ENCODE measurements at regions of chr5 and their contacts with region 1.

Region 1: GRCh38 chr5:82351754-82352145 is 73.6 kb upstream of the RPS23 start:
- DNase-seq: no peak
- ATAC-seq: peak; percentile 56 to 70
- H3K4me3 ChIP-seq: no peak overlapping the region
- H3K27ac ChIP-seq: no peak overlapping the region
- H3K4me1 ChIP-seq: peaks cover 13 to 15% of the 10 kb centered on the region in 2 donors
- H3K27me3 ChIP-seq: no peaks in the 10 kb centered on the region
- CTCF ChIP-seq: peak; percentile 73 to 76 (median 75)
- POLR2A ChIP-seq: no peak

Region 2: GRCh38 chr5:82004511-82004910 is 347.2 kb before region 1 on chr5:
- in situ Hi-C with region 1: no loop called
- intact Hi-C with region 1: no loop called
- DNase-seq: no peak
- ATAC-seq: no peak
- H3K4me3 ChIP-seq: no peak overlapping the region
- H3K27ac ChIP-seq: no peak overlapping the region
- H3K4me1 ChIP-seq: no peaks in the 10 kb centered on the region
- H3K27me3 ChIP-seq: no peaks in the 10 kb centered on the region
- CTCF ChIP-seq: no peak
- POLR2A ChIP-seq: no peak

Region 3: DNA sequence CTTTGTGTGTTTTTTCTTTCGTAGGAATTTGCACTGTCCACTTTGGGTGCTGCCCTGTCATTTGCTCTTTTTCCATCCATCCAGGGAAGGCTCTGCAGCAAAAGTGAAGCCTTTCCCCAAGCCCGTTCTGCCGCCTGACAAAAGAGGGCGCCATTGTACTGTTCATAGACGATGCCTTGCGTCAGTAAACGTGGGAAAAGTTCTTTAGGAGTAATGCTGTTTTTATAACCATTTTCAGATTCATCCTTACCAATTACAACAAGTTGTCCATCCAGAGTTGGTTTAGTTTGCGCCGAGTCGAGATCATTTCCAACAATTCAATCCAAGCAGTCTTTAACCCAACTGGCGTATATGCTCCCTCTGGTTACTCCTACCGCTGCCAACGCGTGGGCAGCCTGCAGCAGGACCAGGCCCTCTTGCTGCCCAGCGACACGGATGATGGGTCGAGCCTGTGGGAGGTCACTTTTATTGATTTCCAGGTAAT is 39.3 kb before region 1 on chr5:
- in situ Hi-C with region 1: no loop called
- intact Hi-C with region 1: loop called (anchors 2 kb)
- DNase-seq: peak; percentile 22 to 35
- ATAC-seq: peak; percentile 77 to 83
- H3K4me3 ChIP-seq: no peak overlapping the region
- H3K27ac ChIP-seq: no peak overlapping the region
- H3K4me1 ChIP-seq: no peaks in the 10 kb centered on the region
- H3K27me3 ChIP-seq: no peaks in the 10 kb centered on the region
- CTCF ChIP-seq: peak; percentile 50 to 83 (median 70)
- POLR2A ChIP-seq: no peak

Region 4: DNA sequence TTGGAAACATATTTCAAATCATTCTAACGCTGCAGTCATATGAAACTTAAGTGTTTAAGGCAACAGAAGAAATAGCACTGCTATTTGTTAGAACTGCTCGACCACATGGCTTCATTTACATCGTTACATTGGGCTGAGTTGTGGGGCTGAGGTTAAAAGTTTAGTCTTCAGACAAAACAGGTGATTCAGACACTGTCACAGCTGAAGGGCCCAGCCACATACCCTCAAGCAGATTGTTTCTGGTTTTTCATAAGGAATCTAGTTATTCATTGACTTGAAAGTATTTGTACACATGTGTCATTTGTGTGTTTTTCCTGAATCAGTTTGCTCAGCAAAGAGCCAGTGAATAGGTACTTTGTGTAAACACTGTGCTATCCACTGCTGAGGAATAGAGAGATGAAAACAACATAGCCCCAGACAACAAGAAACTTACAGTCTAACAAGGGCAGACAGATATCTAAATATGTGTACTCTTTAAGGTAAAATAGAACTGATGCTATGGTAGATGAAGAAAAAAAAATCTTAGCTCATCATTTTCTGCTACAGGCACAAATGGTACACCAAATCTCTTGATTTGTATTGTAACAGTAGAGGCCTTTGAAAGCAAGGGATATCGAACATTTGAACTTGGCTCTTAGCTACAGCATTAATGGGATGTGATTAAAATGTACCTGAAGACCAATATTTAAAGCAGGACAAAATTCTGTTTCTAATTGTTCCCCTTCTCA is 284.0 kb after region 1 on chr5:
- in situ Hi-C with region 1: loop called in 1 of 4 experiments (anchors 10 kb)
- intact Hi-C with region 1: loop called (anchors 5 kb)
- DNase-seq: no peak
- ATAC-seq: no peak
- H3K4me3 ChIP-seq: no peak overlapping the region
- H3K27ac ChIP-seq: no peak overlapping the region
- H3K4me1 ChIP-seq: peaks cover 12 to 17% of the 10 kb centered on the region in 2 donors
- H3K27me3 ChIP-seq: no peaks in the 10 kb centered on the region
- CTCF ChIP-seq: no peak
- POLR2A ChIP-seq: no peak

Region 5: DNA sequence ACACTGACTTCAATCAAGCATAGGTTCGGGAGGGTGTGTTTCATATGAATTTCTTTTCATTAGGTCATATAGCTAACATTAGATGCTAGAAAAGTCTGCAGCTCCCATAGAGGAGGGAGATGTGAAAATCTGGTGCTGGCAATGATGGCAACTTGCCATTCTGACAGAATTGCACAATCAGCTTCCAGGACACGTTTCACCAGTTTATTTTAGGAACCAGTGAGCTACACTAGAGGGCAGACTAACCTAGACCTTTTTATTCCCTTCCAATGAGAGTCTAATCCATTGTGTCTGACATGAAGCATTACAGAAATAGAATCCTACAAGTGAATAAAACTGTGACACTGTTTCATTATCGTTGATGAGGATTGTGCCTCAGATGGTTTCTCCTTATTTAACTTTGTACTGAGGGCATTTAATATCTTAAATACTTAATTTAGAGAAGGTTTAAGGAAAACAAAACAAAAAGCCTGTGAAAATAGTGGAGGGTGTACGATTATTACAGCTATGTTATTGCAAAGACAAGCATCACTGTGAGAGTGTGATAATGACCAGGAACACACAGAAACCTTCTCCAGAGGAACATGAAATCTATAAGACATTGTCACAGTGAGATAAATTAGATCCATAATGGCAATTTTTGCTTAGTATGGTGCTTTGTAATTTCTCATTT is 289.7 kb after region 1 on chr5:
- in situ Hi-C with region 1: loop called in 1 of 4 experiments (anchors 10 kb)
- intact Hi-C with region 1: loop called (anchors 5 kb)
- DNase-seq: peak; percentile 60 to 68
- ATAC-seq: peak; percentile 99
- H3K4me3 ChIP-seq: no peak overlapping the region
- H3K27ac ChIP-seq: peak overlapping the region in 1 of 4 donors; percentile 57
- H3K4me1 ChIP-seq: peaks cover 12 to 27% of the 10 kb centered on the region in 2 donors
- H3K27me3 ChIP-seq: no peaks in the 10 kb centered on the region
- CTCF ChIP-seq: peak; percentile 37 to 65 (median 64)
- POLR2A ChIP-seq: no peak

Region 6: GRCh38 chr5:82793808-82794419 is 442.2 kb after region 1 on chr5:
- in situ Hi-C with region 1: loop called in 2 of 4 experiments (anchors 25 kb)
- intact Hi-C with region 1: loop called (anchors 10 kb)
- DNase-seq: no peak
- ATAC-seq: no peak
- H3K4me3 ChIP-seq: no peak overlapping the region
- H3K27ac ChIP-seq: no peak overlapping the region
- H3K4me1 ChIP-seq: peaks cover 0 to 3% of the 10 kb centered on the region in 2 donors
- H3K27me3 ChIP-seq: no peaks in the 10 kb centered on the region
- CTCF ChIP-seq: peak; percentile 32 to 60 (median 39)
- POLR2A ChIP-seq: no peak

Region 7: DNA sequence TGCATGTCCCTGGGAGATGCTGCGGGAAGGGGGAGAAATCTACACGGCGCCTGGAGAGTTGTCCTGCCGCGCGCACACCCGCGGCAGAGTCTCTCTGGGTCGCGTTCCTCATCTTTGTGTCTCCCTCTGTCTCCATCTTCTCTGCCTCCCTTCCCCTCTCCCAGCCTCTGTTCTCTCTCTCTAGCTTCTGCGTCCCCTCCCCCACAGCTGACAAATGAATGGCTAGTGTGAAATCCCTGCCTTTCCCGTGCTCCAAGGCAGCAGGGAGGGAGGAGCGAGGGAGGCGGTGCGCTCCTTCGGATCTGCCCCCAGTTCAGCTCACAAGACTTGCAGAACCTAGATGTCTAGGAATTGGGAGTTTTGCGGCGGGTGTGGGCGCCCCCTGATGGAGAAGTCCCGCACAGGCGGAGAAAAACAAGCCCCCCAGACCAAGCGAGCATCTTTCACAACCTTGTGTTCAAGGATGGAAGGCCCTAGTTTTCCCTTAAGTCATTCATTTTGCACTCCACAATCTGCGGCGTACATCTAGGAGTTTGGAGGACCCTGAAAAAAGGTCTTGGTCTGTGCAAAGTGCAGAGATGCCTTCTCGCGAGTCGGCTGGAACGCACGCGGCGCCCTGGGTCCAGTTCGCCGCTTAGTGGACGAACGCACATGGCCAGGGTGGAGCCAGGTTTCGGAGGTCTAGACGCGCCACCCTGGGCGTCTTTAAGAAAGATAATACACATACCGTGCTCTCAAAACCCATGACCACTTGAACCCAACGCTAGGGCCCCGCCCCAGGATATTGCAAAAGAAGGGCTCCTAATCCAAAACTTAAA is 1121.8 kb after region 1 on chr5:
- in situ Hi-C with region 1: loop called in 1 of 4 experiments (anchors 25 kb)
- intact Hi-C with region 1: loop called (anchors 5 kb)
- DNase-seq: peak; percentile 67 to 82
- ATAC-seq: peak; percentile 67 to 71
- H3K4me3 ChIP-seq: peak overlapping the region; percentile 49 to 57 (median 50)
- H3K27ac ChIP-seq: peak overlapping the region; percentile 59 to 65 (median 62)
- H3K4me1 ChIP-seq: peaks cover 14 to 35% of the 10 kb centered on the region in 2 donors
- H3K27me3 ChIP-seq: peaks cover 49 to 70% (median 68%) of the 10 kb centered on the region in 3 donors
- CTCF ChIP-seq: peak; percentile 18 to 61 (median 52)
- POLR2A ChIP-seq: peak; percentile 6 to 53

Region 8: GRCh38 chr5:83564069-83564749 is 1212.5 kb after region 1 on chr5:
- in situ Hi-C with region 1: loop called (anchors 5 to 10 kb)
- intact Hi-C with region 1: loop called (anchors 1 kb)
- DNase-seq: no peak
- ATAC-seq: peak; percentile 43 to 44
- H3K4me3 ChIP-seq: no peak overlapping the region
- H3K27ac ChIP-seq: no peak overlapping the region
- H3K4me1 ChIP-seq: no peaks in the 10 kb centered on the region
- H3K27me3 ChIP-seq: no peaks in the 10 kb centered on the region
- CTCF ChIP-seq: peak in 4 of 5 experiments; percentile 42 to 68 (median 54)
- POLR2A ChIP-seq: no peak